ENCODE measurements at regions of chr18 and their contacts with region 1.

Region 1: DNA sequence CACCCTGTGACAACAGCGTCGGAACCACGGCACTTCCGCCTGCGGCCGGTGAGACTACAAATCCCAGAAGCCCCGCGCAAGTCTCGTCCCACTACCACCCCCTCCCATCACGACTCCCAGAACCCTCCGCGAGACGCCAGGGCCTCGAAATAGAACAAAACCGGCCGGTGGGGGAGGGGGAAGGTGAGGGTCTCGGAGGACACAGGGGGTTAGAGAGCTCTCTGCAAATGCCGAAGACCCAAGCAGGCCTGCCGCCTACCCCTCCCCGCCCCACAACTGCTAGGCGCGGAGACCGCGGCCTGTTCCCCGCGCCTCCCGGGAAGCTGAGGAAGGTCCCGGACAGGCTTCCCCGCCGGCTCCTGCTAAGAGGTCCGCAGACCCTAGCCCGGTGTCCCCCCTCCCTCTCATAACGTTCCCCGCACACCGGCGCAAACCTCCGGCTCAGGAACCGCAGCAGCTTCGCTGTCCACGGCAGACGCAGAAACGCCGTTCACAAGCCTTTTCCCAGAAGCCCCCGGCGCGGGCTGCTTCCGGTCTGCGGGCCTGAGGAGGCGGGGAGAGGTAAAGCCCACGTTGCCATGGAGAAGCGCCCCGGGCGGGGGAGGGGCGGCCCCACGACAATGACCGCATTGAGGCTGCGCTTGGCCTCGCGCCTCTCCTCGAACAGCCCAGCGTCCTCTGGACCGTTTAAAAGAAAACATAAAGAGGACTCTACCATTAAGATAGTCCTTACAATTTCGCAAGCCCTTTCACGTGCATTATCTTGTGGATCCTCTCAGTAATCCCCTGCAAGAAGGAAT is at the start of gene ZNF24:
- DNase-seq: peak; percentile 96 to 98
- H3K4me3 ChIP-seq: peak within 1 kb of the TSS; percentile 63 to 99 (median 91)
- H3K27ac ChIP-seq: peak within 1 kb of the TSS; percentile 96 to 100 (median 100)
- H3K4me1 ChIP-seq: peaks cover 24 to 35% of the 10 kb centered on the region in 2 donors
- H3K27me3 ChIP-seq: no peaks in the 10 kb centered on the region
- CTCF ChIP-seq: no peak
- POLR2A ChIP-seq: peak; percentile 63 to 87
- total RNA-seq, gene ZNF24: 54.9 to 76.2 (median 58.1) TPM

Region 2: GRCh38 chr18:35290073-35290735 is 53.9 kb before region 1 on chr18 and contains the start of gene ZSCAN30:
- intact Hi-C with region 1: loop called (anchors 10 kb)
- DNase-seq: peak; percentile 94
- H3K4me3 ChIP-seq: peak within 1 kb of the TSS; percentile 47 to 95 (median 68)
- H3K27ac ChIP-seq: peak within 1 kb of the TSS; percentile 34 to 87 (median 84)
- H3K4me1 ChIP-seq: peaks cover 6 to 18% of the 10 kb centered on the region in 2 donors
- H3K27me3 ChIP-seq: no peaks in the 10 kb centered on the region
- CTCF ChIP-seq: no peak
- POLR2A ChIP-seq: peak in 1 of 2 donors; percentile 75
- total RNA-seq, gene ZSCAN30: 33.7 to 49.6 (median 41.8) TPM